ENCODE measurements at regions of chr4 and their contacts with region 1.

Region 1: DNA sequence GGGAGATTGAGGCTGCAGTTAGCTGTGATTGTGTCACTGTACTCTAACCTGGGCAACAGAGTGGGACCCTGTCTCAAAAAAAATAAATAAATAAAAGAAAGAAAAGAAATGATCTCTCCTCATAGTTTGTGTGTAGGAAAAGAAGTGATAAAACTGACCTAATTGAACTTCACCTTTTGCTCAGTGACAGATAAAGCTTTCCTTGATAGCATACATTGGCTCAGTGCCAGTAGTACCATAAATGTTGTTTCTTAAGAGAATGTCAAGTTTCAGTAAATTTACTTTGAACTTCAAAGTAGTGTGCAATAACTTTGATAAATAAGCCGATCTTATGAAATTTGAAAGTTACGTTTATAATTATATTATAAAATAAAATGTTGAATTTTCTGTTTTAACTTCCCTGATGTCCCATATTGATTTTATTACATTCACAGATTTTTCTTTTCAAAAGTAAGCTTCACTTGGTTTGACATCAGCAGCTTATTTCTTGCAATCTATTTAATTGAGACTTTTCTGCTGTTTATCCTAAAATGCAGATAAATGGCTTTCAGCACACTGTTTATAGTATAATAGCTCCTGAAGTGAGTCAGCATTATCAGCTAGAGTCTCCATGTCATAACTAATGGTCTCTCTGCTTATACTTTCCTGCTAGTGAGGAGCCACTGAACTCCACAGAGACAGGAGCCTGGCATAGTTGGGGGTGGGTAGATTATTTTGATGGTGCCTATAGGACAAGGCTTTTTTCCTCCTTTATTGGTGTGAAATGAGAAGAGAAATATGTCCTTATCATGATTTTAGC is 330.1 kb downstream of the BMPR1B start:
- DNase-seq: no peak
- ATAC-seq: no peak
- H3K4me3 ChIP-seq: no peak overlapping the region
- H3K27ac ChIP-seq: peak overlapping the region; percentile 100
- H3K4me1 ChIP-seq: peaks cover 84% of the 10 kb centered on the region
- H3K27me3 ChIP-seq: no peaks in the 10 kb centered on the region
- CTCF ChIP-seq: no peak

Region 2: DNA sequence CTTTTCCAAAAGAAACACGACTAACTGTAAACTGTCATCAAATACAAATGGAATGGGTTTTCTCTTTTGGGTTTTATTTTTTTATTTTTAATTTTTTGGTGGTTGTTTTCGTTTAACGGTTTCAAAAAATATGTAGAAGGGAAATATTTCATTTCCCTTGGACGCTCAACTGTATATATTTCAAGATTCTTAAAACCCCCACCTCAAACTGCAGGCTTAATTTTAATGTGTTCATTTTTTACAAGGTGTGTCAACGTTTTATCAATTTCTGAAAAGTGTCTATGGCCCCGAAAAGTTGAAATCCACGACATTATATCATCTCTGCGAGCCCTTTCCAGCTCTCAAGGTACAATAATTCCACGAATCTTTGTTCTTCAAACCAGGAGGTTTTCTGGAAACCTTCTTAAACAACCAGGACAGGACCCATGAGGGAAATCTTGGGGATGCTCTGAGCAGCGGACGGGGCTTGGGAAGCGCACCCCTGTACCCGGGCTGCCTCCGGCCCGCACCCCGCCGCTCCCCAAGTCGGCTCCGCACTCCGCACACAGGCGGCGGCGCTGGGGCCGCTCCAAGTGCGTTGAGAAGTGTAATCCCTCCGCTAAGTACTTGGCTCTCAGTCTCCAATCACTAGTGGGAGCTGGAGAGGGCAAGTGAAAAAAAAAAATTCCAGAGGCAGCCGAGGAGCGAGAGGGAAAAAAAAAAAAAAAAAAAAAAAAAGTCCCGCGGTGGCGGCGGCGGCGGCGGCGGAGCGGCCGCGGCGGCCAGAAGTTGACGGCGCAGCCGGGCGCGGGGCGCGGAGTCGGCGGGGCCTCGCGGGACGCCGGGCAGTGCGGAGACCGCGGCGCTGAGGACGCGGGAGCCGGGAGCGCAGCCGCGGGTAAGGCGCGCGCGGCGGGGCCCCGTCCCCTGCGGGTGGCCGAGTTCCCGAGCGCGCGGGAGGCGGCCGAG is 330.4 kb before region 1 on chr4 and contains the start of gene BMPR1B:
- CTCF ChIA-PET with region 1: no interaction called
- POLR2A ChIA-PET with region 1: no interaction called
- intact Hi-C with region 1: loop called (anchors 1 kb)
- DNase-seq: peak; percentile 65
- ATAC-seq: peak; percentile 10; the same call in 1 of the 2 replicates
- H3K4me3 ChIP-seq: peak within 1 kb of the TSS; percentile 94
- H3K27ac ChIP-seq: peak within 1 kb of the TSS; percentile 78
- H3K4me1 ChIP-seq: peaks cover 23% of the 10 kb centered on the region
- H3K27me3 ChIP-seq: no peaks in the 10 kb centered on the region
- CTCF ChIP-seq: no peak
- total RNA-seq, gene BMPR1B: 5.0 and 7.1 TPM in 2 replicates

Region 3: GRCh38 chr4:94976371-94977011 is 111.4 kb before region 1 on chr4:
- CTCF ChIA-PET with region 1: no interaction called
- POLR2A ChIA-PET with region 1: no interaction called
- intact Hi-C with region 1: loop called (anchors 1 kb)
- DNase-seq: peak; percentile 78
- ATAC-seq: peak; percentile 58
- H3K4me3 ChIP-seq: no peak overlapping the region
- H3K27ac ChIP-seq: peak overlapping the region; percentile 96
- H3K4me1 ChIP-seq: peaks cover 34% of the 10 kb centered on the region
- H3K27me3 ChIP-seq: no peaks in the 10 kb centered on the region
- CTCF ChIP-seq: no peak

Region 4: DNA sequence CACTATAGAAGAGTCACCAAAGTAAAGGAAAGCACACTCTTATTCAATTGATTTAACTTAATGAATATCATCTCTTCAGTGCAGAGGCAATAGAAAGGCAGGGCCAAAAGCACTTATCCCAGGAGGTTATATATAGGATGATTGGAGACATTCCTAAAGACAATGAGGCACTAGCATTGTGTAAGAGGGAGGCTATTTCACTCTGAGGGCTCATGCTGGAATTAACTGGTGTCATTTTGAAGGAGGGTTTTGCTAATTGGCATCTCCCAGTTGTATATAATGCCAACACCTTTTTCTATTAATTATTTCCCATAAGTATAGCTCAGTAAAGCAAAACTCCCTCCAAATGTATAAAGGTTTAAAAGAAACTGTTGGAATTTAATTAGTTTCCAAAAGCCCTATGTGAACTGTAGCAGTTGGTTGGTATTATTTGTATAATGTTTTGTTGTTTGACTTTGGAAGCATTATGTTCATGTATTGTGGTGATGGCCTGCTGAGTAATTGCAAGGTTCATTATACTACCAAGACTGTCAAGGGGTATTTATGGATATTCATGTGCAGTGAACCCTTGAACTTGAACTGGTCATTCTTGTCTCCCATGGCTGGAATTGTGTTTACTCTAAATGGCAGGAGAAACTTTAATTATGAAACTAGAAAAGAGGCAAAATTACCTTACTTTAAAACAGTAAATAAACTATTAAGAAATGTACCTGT is 59.8 kb before region 1 on chr4:
- CTCF ChIA-PET with region 1: no interaction called
- POLR2A ChIA-PET with region 1: no interaction called
- intact Hi-C with region 1: loop called (anchors 1 kb)
- DNase-seq: peak; percentile 20
- ATAC-seq: peak; percentile 55
- H3K4me3 ChIP-seq: no peak overlapping the region
- H3K27ac ChIP-seq: peak overlapping the region; percentile 58
- H3K4me1 ChIP-seq: peaks cover 34% of the 10 kb centered on the region
- H3K27me3 ChIP-seq: no peaks in the 10 kb centered on the region
- CTCF ChIP-seq: no peak

Region 5: GRCh38 chr4:95049551-95050233 is 38.2 kb before region 1 on chr4:
- CTCF ChIA-PET with region 1: no interaction called
- POLR2A ChIA-PET with region 1: no interaction called
- intact Hi-C with region 1: loop called (anchors 5 kb)
- DNase-seq: no peak
- ATAC-seq: no peak
- H3K4me3 ChIP-seq: no peak overlapping the region
- H3K27ac ChIP-seq: no peak overlapping the region
- H3K4me1 ChIP-seq: peaks cover 16% of the 10 kb centered on the region
- H3K27me3 ChIP-seq: no peaks in the 10 kb centered on the region
- CTCF ChIP-seq: no peak

Region 6: DNA sequence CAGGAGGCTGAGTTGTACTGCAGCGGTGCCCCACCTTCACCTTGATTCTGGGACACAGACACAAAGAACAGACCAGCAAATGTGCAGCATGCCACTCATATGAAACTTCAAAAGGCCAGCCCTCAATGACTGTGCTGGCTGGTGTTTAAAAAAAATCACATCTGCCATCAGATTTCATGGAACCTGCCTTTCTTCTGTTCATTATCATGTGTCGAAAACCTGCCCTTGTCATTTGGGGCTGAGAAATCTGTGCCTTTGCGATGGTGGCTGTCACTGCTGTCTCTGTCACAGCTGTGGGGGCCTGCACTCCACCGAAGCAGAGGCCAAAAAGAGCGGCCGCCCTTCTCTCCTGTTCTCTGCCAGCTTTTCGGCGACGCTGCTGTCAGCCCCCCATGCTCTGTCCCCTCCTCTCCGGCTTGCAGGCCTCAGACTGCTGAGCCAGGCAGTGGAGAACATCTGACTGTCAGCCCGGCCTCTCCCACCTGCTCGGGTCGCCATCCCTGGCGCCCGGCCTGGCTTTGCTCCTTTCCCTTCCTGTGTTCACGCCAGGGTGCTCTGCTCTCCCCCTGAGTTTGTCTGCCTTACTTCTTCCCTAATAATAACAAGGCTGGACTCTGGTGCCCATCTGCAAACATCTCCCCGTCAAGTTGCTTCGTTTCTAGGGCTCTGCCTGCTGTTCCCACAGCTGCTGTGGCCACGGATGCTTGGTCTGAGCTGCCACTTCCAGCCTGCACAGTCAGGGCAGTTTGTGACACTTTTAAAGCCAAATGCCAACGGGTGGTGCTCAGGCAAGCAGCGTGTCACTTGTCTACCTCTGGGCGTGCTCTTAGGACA is 105.8 kb after region 1 on chr4:
- CTCF ChIA-PET with region 1: no interaction called
- POLR2A ChIA-PET with region 1: no interaction called
- intact Hi-C with region 1: no loop called
- DNase-seq: no peak
- ATAC-seq: no peak
- H3K4me3 ChIP-seq: no peak overlapping the region
- H3K27ac ChIP-seq: no peak overlapping the region
- H3K4me1 ChIP-seq: no peaks in the 10 kb centered on the region
- H3K27me3 ChIP-seq: no peaks in the 10 kb centered on the region
- CTCF ChIP-seq: no peak

Measured in PC-3 (cell line).